ENCODE measurements at regions of chr9 and their contacts with region 1.

Region 1: DNA sequence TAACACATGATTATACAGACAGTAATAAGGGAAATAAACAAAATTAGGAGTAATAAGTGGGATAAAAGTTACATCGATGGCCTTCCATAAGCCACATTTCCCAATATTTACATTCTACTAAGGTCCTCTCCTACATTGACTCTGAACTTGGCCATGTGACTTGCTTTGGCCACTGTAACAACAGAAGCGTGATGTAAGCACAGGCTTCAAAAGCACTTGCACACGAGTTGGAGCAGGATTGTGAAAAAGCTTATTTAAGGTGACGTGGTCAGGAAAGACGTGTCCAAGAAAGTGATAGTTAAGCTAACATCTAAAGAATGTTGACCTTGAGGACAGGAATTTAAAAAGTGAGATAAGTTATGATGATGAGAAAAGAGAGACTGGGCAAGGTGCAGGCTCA is 9.8 kb upstream of the CEMIP2 start:
- DNase-seq: no peak
- ATAC-seq: no peak
- H3K4me3 ChIP-seq: no peak overlapping the region
- H3K4me3 Mint-ChIP-seq: no peak overlapping the region
- H3K27ac ChIP-seq: no peak overlapping the region
- H3K27ac Mint-ChIP-seq: no peak overlapping the region
- H3K4me1 ChIP-seq: peaks cover 31% of the 10 kb centered on the region
- H3K4me1 Mint-ChIP-seq: peaks cover 40% of the 10 kb centered on the region
- H3K27me3 ChIP-seq: no peaks in the 10 kb centered on the region
- H3K27me3 Mint-ChIP-seq: no peaks in the 10 kb centered on the region
- CTCF ChIP-seq: no peak

Region 2: GRCh38 chr9:71171517-71171916 is 606.6 kb before region 1 on chr9:
- CTCF ChIA-PET with region 1: no interaction called
- POLR2A ChIA-PET with region 1: no interaction called
- intact Hi-C with region 1: no loop called
- DNase-seq: no peak
- ATAC-seq: no peak
- H3K4me3 ChIP-seq: no peak overlapping the region
- H3K4me3 Mint-ChIP-seq: no peak overlapping the region
- H3K27ac ChIP-seq: no peak overlapping the region
- H3K27ac Mint-ChIP-seq: no peak overlapping the region
- H3K4me1 ChIP-seq: no peaks in the 10 kb centered on the region
- H3K4me1 Mint-ChIP-seq: no peaks in the 10 kb centered on the region
- H3K27me3 ChIP-seq: no peaks in the 10 kb centered on the region
- H3K27me3 Mint-ChIP-seq: no peaks in the 10 kb centered on the region
- CTCF ChIP-seq: no peak

Region 3: GRCh38 chr9:71210326-71210725 is 567.8 kb before region 1 on chr9:
- CTCF ChIA-PET with region 1: no interaction called
- POLR2A ChIA-PET with region 1: no interaction called
- intact Hi-C with region 1: no loop called
- DNase-seq: no peak
- ATAC-seq: no peak
- H3K4me3 ChIP-seq: no peak overlapping the region
- H3K4me3 Mint-ChIP-seq: no peak overlapping the region
- H3K27ac ChIP-seq: no peak overlapping the region
- H3K27ac Mint-ChIP-seq: no peak overlapping the region
- H3K4me1 ChIP-seq: no peaks in the 10 kb centered on the region
- H3K4me1 Mint-ChIP-seq: no peaks in the 10 kb centered on the region
- H3K27me3 ChIP-seq: no peaks in the 10 kb centered on the region
- H3K27me3 Mint-ChIP-seq: no peaks in the 10 kb centered on the region
- CTCF ChIP-seq: no peak

Region 4: GRCh38 chr9:71655151-71655550 is 122.9 kb before region 1 on chr9:
- CTCF ChIA-PET with region 1: no interaction called
- POLR2A ChIA-PET with region 1: no interaction called
- intact Hi-C with region 1: no loop called
- DNase-seq: no peak
- ATAC-seq: no peak
- H3K4me3 ChIP-seq: no peak overlapping the region
- H3K4me3 Mint-ChIP-seq: no peak overlapping the region
- H3K27ac ChIP-seq: no peak overlapping the region
- H3K27ac Mint-ChIP-seq: no peak overlapping the region
- H3K4me1 ChIP-seq: no peaks in the 10 kb centered on the region
- H3K4me1 Mint-ChIP-seq: peaks cover 2% of the 10 kb centered on the region
- H3K27me3 ChIP-seq: no peaks in the 10 kb centered on the region
- H3K27me3 Mint-ChIP-seq: no peaks in the 10 kb centered on the region
- CTCF ChIP-seq: no peak

Region 5: DNA sequence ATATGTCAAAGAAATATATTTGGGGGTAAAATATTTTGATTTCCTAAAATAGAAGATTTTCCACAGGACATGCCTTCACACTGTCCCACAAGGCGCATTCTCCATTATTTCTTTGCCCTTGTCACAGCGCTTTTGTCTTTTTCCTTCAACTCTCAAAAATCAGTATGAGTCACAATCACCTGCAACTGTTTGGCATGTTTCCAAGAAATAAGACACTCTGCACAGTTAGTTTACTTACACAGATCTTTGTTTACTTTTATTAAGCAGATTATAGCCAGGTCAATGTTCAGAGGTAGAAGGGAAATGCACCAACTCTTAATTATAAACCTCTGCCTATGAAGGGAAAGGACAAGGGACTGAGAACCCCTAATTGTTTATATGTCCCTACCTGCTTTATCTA is 19.3 kb before region 1 on chr9:
- CTCF ChIA-PET with region 1: no interaction called
- POLR2A ChIA-PET with region 1: no interaction called
- intact Hi-C with region 1: loop called in 1 of 2 experiments (anchors 2 kb)
- DNase-seq: peak in 1 of 9 experiments; percentile 44
- ATAC-seq: peak; percentile 18
- H3K4me3 ChIP-seq: no peak overlapping the region
- H3K4me3 Mint-ChIP-seq: no peak overlapping the region
- H3K27ac ChIP-seq: no peak overlapping the region
- H3K27ac Mint-ChIP-seq: no peak overlapping the region
- H3K4me1 ChIP-seq: peaks cover 55% of the 10 kb centered on the region
- H3K4me1 Mint-ChIP-seq: peaks cover 85% of the 10 kb centered on the region
- H3K27me3 ChIP-seq: no peaks in the 10 kb centered on the region
- H3K27me3 Mint-ChIP-seq: no peaks in the 10 kb centered on the region
- CTCF ChIP-seq: no peak